HCT116 (cell line): ENCODE measurements at regions of chr5 and their contacts with region 1.

Region 1: GRCh38 chr5:135466178-135467050 is 14.3 kb upstream of the TIFAB start:
- DNase-seq: peak; percentile 36
- ATAC-seq: peak; percentile 85
- H3K4me3 ChIP-seq: no peak overlapping the region
- H3K27ac ChIP-seq: no peak overlapping the region
- H3K4me1 ChIP-seq: peaks cover 0 to 11% of the 10 kb centered on the region in 2 experiments; a peak in 2 of 4 replicates
- H3K27me3 ChIP-seq: no peaks in the 10 kb centered on the region
- CTCF ChIP-seq: peak; percentile 87 to 93 (median 92)
- POLR2A ChIP-seq: no peak
- RAD21 ChIP-seq: peak; percentile 98

Region 2: GRCh38 chr5:135437796-135438560 is 28.4 kb before region 1 on chr5:
- CTCF ChIA-PET with region 1: interaction called, 12 read pairs
- POLR2A ChIA-PET with region 1: no interaction called
- RAD21 ChIA-PET with region 1: no interaction called
- intact Hi-C with region 1: no loop called
- DNase-seq: peak; percentile 44
- ATAC-seq: peak; percentile 79
- H3K4me3 ChIP-seq: no peak overlapping the region
- H3K27ac ChIP-seq: no peak overlapping the region
- H3K4me1 ChIP-seq: peaks cover 10 to 17% of the 10 kb centered on the region in 2 experiments; a peak in 3 of 4 replicates
- H3K27me3 ChIP-seq: no peaks in the 10 kb centered on the region
- CTCF ChIP-seq: 0 out of 6 replicates have a peak, but pooled peaks of 1 of the 3 experiments have one; percentile 17
- POLR2A ChIP-seq: no peak
- RAD21 ChIP-seq: no peak

Region 3: DNA sequence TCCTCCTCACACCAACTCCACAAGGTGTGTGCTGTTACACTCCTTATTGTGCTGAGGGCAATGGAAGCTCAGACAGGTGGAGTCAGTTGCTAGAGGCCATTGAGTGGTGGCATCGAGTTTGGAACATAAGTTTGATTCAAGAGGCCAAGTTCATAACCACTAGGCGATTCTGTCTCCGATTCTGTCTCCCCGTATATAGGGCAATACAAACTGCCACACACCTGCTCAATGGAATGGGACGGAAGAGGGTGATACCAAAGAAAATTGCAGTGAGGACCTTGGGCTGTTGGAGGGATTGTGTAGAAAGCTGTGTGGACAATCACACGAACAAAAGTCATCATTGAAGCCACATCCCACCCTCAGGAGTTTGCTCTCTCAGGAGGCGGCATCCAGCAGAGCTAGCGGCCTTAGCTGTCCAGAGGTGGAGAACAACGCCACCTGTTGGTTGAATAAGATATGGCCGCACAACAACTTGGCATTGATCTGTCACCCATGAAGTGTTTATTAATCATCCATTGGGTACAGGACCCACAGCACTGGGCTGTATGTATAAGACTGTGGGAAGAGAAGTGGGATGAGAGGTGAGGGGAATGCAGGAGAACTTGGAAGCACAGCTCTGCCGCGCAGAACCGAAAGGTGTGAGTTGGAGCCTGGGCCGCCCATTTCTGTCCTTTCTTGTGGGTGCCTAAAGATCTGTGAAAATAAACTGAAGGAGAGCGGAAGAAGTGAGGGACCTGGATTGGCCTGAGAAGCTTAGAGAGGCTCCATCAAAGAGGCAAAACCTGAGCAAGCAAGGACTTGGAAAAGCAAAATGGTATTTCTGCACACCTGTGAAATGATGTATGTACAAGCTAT is 85.4 kb after region 1 on chr5:
- CTCF ChIA-PET with region 1: interaction called, 476 read pairs
- POLR2A ChIA-PET with region 1: interaction called, 11 read pairs
- RAD21 ChIA-PET with region 1: interaction called, 8 to 17 read pairs
- intact Hi-C with region 1: loop called (anchors 1 kb)
- DNase-seq: peak; percentile 69
- ATAC-seq: peak; percentile 85
- H3K4me3 ChIP-seq: no peak overlapping the region
- H3K27ac ChIP-seq: no peak overlapping the region
- H3K4me1 ChIP-seq: peaks cover 8% of the 10 kb centered on the region in 2 experiments
- H3K27me3 ChIP-seq: peaks cover 11% of the 10 kb centered on the region; the same call in 1 of the 2 replicates
- CTCF ChIP-seq: peak; percentile 85 to 92 (median 92)
- POLR2A ChIP-seq: no peak
- RAD21 ChIP-seq: peak; percentile 94

Region 4: GRCh38 chr5:135560858-135561257 is 94.4 kb after region 1 on chr5:
- CTCF ChIA-PET with region 1: interaction called, 476 read pairs
- POLR2A ChIA-PET with region 1: no interaction called
- RAD21 ChIA-PET with region 1: interaction called, 8 to 9 read pairs
- intact Hi-C with region 1: loop called (anchors 1 kb)
- DNase-seq: peak; percentile 65
- ATAC-seq: peak; percentile 97
- H3K4me3 ChIP-seq: no peak overlapping the region
- H3K27ac ChIP-seq: no peak overlapping the region
- H3K4me1 ChIP-seq: peaks cover 0 to 7% of the 10 kb centered on the region in 2 experiments; a peak in 1 of 4 replicates
- H3K27me3 ChIP-seq: no peaks in the 10 kb centered on the region
- CTCF ChIP-seq: peak; percentile 84 to 90 (median 84)
- POLR2A ChIP-seq: no peak
- RAD21 ChIP-seq: peak; percentile 88

Region 5: DNA sequence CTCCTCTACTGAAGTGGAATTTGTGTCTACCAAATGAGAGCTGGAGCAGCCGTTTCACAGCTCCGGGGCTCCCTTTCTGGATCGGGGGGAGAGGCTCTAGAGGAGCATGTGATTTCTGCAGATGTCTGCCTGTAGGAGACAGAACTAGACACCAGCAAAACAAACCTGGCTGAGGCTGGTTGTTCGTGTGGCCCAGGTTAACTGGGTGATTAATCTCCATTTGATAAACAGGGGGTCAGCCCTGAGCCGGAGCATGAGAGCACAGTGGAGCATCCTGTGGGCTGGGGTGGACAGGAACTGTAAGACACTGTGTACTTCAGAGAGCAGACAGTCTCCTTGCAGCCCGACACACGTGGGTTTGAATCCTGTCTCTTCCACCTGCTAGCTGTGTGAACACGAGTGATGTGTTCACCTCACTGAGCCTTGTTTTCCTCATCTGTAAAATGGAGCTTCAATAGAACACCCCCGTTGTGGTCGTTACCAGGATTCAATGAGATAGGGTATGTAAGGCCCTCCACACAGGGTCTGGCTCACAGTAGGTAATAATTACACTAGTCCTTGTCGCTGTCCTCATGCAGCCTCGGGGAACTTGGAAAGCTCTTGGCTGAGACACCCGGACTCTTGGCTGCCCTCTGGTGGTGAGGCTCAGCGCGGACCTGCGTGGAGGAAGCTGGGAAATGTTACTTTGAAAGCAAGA is 99.5 kb after region 1 on chr5:
- CTCF ChIA-PET with region 1: interaction called, 153 read pairs
- POLR2A ChIA-PET with region 1: no interaction called
- RAD21 ChIA-PET with region 1: interaction called, 8 to 9 read pairs
- intact Hi-C with region 1: loop called (anchors 1 kb)
- DNase-seq: peak; percentile 50
- ATAC-seq: peak; percentile 77
- H3K4me3 ChIP-seq: no peak overlapping the region
- H3K27ac ChIP-seq: no peak overlapping the region
- H3K4me1 ChIP-seq: peaks cover 0 to 13% of the 10 kb centered on the region in 2 experiments; a peak in 1 of 4 replicates
- H3K27me3 ChIP-seq: no peaks in the 10 kb centered on the region
- CTCF ChIP-seq: peak; percentile 84 to 98 (median 97); a peak in 5 of 6 replicates
- POLR2A ChIP-seq: no peak
- RAD21 ChIP-seq: peak; percentile 71

Region 6: DNA sequence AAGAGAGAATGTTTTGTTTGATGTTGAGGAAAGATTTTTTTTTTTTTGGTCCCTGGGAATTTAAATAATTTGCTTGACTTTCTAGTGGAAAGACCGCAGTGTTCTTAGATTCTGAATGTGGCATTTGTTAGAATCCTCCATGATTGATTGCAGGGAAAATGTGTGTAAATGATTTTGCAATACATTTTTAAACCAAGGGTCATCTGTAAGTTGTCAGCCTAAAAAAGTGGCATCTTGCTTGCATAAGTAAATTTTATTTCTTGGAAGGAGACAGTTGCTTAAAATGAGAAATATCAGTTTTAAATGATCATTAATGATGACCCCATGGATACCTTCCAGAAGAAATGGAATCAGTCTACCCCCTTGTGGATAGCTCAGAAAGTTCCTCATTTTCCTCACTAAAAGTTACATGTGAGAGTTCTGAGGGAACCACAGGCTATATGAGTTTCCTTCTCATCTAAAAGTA is 262.9 kb after region 1 on chr5:
- CTCF ChIA-PET with region 1: interaction called, 4 read pairs
- POLR2A ChIA-PET with region 1: no interaction called
- RAD21 ChIA-PET with region 1: no interaction called
- intact Hi-C with region 1: loop called (anchors 5 kb)
- DNase-seq: no peak
- ATAC-seq: peak; percentile 63
- H3K4me3 ChIP-seq: no peak overlapping the region
- H3K27ac ChIP-seq: no peak overlapping the region
- H3K4me1 ChIP-seq: no peaks in the 10 kb centered on the region
- H3K27me3 ChIP-seq: no peaks in the 10 kb centered on the region
- CTCF ChIP-seq: peak; percentile 35 to 46 (median 41); a peak in 4 of 6 replicates
- POLR2A ChIP-seq: no peak
- RAD21 ChIP-seq: peak; percentile 54

Region 7: GRCh38 chr5:135829681-135830383 is 363.4 kb after region 1 on chr5:
- CTCF ChIA-PET with region 1: interaction called, 5 read pairs
- POLR2A ChIA-PET with region 1: no interaction called
- RAD21 ChIA-PET with region 1: no interaction called
- intact Hi-C with region 1: loop called (anchors 1 kb)
- DNase-seq: peak; percentile 63
- ATAC-seq: peak; percentile 69
- H3K4me3 ChIP-seq: no peak overlapping the region
- H3K27ac ChIP-seq: no peak overlapping the region
- H3K4me1 ChIP-seq: peaks cover 0 to 13% of the 10 kb centered on the region in 2 experiments; a peak in 1 of 4 replicates
- H3K27me3 ChIP-seq: no peaks in the 10 kb centered on the region
- CTCF ChIP-seq: peak; percentile 83 to 92 (median 91)
- POLR2A ChIP-seq: no peak
- RAD21 ChIP-seq: peak; percentile 90

Region 8: DNA sequence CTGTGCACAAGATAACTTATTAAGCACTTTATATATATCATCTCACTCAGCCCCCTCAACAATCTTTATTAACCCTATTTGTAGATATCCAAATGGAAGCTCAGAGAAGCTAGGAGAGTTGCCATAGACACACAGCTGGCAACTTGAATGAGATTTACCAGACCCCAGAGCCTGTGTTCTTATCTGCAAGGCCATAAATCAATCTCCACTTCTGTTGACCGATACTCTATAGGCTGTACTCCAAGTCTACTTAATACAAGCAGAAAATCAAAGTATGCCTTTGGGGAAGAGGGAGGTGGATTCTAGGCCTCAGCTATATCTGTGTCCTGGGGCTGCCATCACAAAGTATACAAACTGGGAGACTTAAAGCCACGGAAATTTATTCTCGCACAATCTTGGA is 435.2 kb after region 1 on chr5:
- CTCF ChIA-PET with region 1: no interaction called
- POLR2A ChIA-PET with region 1: no interaction called
- RAD21 ChIA-PET with region 1: no interaction called
- intact Hi-C with region 1: no loop called
- DNase-seq: no peak
- ATAC-seq: no peak
- H3K4me3 ChIP-seq: no peak overlapping the region
- H3K27ac ChIP-seq: no peak overlapping the region
- H3K4me1 ChIP-seq: no peaks in the 10 kb centered on the region
- H3K27me3 ChIP-seq: peaks cover 74% of the 10 kb centered on the region
- CTCF ChIP-seq: no peak
- POLR2A ChIP-seq: no peak
- RAD21 ChIP-seq: no peak